Body of pancreas (tissue), 4 donors: ENCODE measurements at regions of chr3 and their contacts with region 1.

Region 1: GRCh38 chr3:122101646-122102045 is 46.5 kb downstream of the CD86 start:
- DNase-seq: peak in 2 of 4 donors; percentile 22 to 56
- ATAC-seq: peak; percentile 68
- H3K4me3 ChIP-seq: no peak overlapping the region
- H3K27ac ChIP-seq: no peak overlapping the region
- H3K4me1 ChIP-seq: no peaks in the 10 kb centered on the region
- H3K27me3 ChIP-seq: no peaks in the 10 kb centered on the region
- CTCF ChIP-seq: peak; percentile 44 to 93 (median 77)
- POLR2A ChIP-seq: no peak

Region 2: DNA sequence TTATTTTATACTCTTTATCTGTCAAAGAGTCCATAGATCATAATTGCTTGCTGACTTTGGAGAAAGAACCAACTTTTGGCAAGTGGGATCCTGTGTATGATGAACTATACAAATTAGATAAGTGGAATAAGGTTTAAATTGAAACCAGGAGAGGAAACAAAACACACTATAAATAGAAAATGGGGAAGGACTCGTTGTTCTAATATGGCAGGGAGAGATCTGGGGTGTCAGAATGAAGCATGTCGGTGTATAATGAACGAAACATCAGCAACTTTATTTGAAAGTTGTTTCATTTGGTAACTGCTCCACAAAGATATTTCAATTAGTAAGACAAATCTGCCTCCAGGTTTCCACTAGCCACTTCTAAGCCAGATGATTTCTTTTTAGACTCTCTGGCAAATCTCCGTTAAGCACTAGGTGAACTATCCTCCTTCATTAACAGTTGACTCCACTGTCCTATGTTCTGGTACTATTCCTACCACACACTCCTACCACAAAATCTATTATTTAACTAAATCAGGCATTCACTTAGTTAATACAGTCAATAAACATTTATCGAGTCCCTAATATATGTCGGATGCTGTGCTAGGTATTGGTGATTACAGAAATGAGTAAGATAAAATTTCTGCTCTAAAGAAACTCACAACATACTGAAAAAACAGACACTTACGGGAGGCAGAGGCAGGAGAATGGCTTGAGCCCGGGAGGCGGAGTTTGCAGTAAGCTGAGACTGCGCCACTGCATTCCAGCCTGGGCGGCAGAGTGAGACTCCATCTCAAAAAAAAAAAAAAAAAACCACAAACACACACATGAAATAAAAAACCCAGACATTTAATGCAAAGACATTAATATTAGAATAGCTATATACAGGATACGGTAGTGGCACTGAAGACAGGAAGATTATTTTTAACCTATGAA is 187.3 kb before region 1 on chr3:
- intact Hi-C with region 1: no loop called
- DNase-seq: no peak
- ATAC-seq: no peak
- H3K4me3 ChIP-seq: no peak overlapping the region
- H3K27ac ChIP-seq: no peak overlapping the region
- H3K4me1 ChIP-seq: peaks cover 4% of the 10 kb centered on the region
- H3K27me3 ChIP-seq: no peaks in the 10 kb centered on the region
- CTCF ChIP-seq: no peak
- POLR2A ChIP-seq: no peak

Region 3: DNA sequence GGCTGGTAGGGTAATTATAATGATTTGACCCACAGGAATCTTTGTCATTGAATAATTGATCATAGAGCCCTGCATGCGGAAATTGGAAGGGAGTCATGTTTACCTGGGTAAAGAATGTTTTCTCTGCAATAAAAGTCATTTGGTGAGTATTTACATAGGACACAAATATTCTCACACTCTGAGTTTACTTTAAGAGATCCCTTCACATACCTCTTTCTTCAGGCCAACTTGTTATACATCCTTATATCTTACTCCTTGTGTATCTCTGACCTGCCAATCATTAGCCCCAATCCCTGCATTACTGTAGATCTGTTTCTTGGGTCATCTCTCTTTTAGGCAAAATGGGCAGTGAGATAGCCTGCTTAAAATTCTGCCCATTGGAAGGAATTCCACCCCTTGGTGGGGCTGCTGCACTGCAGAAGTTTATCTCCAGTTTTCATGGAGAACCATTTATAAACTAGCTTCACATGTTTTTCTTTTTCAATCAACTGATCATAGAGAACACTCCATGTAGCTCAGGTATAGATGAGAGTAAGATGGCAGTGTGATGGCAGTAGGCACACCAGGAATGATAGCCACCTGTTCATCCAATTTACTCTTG is 125.8 kb before region 1 on chr3:
- intact Hi-C with region 1: no loop called
- DNase-seq: no peak
- ATAC-seq: peak; percentile 75
- H3K4me3 ChIP-seq: no peak overlapping the region
- H3K27ac ChIP-seq: peak overlapping the region; percentile 34 to 59 (median 56)
- H3K4me1 ChIP-seq: peaks cover 58% of the 10 kb centered on the region
- H3K27me3 ChIP-seq: no peaks in the 10 kb centered on the region
- CTCF ChIP-seq: peak in 4 of 7 experiments; percentile 7 to 24 (median 19)
- POLR2A ChIP-seq: no peak

Region 4: GRCh38 chr3:122263974-122264588 is 162.4 kb after region 1 on chr3:
- intact Hi-C with region 1: loop called (anchors 5 kb)
- DNase-seq: no peak
- ATAC-seq: no peak
- H3K4me3 ChIP-seq: no peak overlapping the region
- H3K27ac ChIP-seq: no peak overlapping the region
- H3K4me1 ChIP-seq: peaks cover 10% of the 10 kb centered on the region
- H3K27me3 ChIP-seq: no peaks in the 10 kb centered on the region
- CTCF ChIP-seq: no peak
- POLR2A ChIP-seq: no peak